ENCODE measurements at regions of chr13 and their contacts with region 1.

Region 1: GRCh38 chr13:42110410-42111155 is 62.1 kb downstream of the DGKH start:
- DNase-seq: peak; percentile 24
- H3K4me3 ChIP-seq: no peak overlapping the region
- H3K27ac ChIP-seq: no peak overlapping the region
- H3K4me1 ChIP-seq: no peaks in the 10 kb centered on the region
- H3K27me3 ChIP-seq: no peaks in the 10 kb centered on the region
- CTCF ChIP-seq: peak; percentile 78 to 91 (median 88)
- POLR2A ChIP-seq: no peak

Region 2: DNA sequence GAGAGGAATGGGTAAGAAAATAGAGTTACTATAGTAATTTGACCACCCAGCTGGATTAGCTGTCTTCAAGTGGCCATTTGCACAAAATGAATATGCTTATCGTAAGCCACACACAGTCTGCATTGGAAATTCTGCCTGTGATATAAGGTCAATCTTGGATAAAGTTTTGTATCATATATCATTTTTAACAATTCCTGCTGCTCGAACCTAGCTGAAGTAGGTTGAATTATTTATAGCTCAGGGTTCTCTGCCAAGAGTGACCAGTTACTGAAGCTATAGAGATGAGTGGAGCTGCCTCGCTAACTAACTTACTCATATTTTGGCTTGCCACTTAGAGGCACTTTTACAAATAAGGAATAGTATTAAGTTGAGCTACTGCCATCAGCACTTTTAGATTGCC is 432.3 kb before region 1 on chr13:
- intact Hi-C with region 1: loop called (anchors 10 kb)
- DNase-seq: no peak
- H3K4me3 ChIP-seq: no peak overlapping the region
- H3K27ac ChIP-seq: no peak overlapping the region
- H3K4me1 ChIP-seq: no peaks in the 10 kb centered on the region
- H3K27me3 ChIP-seq: no peaks in the 10 kb centered on the region
- CTCF ChIP-seq: no peak
- POLR2A ChIP-seq: no peak

Region 3: GRCh38 chr13:43085545-43085944 is 975.0 kb after region 1 on chr13:
- intact Hi-C with region 1: no loop called
- DNase-seq: no peak
- H3K4me3 ChIP-seq: no peak overlapping the region
- H3K27ac ChIP-seq: no peak overlapping the region
- H3K4me1 ChIP-seq: peaks cover 14% of the 10 kb centered on the region
- H3K27me3 ChIP-seq: no peaks in the 10 kb centered on the region
- CTCF ChIP-seq: peak; percentile 42 to 75 (median 48)
- POLR2A ChIP-seq: no peak